ENCODE measurements at regions of chr12 and their contacts with region 1.

Region 1: GRCh38 chr12:27434673-27435565 is 11.6 kb upstream of the SMCO2 start:
- DNase-seq: peak; percentile 28
- CTCF ChIP-seq: peak; percentile 54

Region 2: GRCh38 chr12:27109334-27110028 is 325.4 kb before region 1 on chr12:
- in situ Hi-C with region 1: no loop called
- DNase-seq: no peak
- CTCF ChIP-seq: no peak

Region 3: GRCh38 chr12:27644158-27644845 is 209.4 kb after region 1 on chr12:
- in situ Hi-C with region 1: loop called (anchors 10 kb)
- DNase-seq: no peak
- CTCF ChIP-seq: no peak

Measured in GM13977 (cell line).